ENCODE measurements at regions of chr3 and their contacts with region 1.

Region 1: DNA sequence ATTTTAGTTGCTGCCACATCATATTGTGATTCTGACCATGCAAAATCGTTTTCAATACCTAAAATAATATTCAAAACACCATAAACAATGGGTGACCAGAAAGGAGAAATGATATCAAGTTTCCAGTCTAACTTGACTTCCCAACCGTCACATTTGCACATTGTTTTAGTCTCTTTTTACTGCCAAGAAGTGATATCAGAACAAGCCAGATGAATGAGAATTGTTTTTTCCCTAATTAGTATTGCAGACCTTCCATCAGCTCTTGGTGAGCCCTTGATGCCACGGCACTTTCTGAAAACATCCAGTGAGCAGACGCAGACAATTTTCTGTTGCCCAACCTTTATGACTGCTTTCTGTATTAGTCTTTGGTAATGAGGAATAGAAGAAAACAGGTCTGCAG is 62.5 kb downstream of the SPATA16 start:
- DNase-seq: no peak
- H3K4me3 ChIP-seq: no peak overlapping the region
- H3K27ac ChIP-seq: no peak overlapping the region
- H3K4me1 ChIP-seq: no peaks in the 10 kb centered on the region
- H3K27me3 ChIP-seq: no peaks in the 10 kb centered on the region
- CTCF ChIP-seq: no peak
- POLR2A ChIP-seq: no peak

Region 2: GRCh38 chr3:172289582-172289981 is 788.9 kb before region 1 on chr3:
- intact Hi-C with region 1: no loop called
- DNase-seq: no peak
- H3K4me3 ChIP-seq: no peak overlapping the region
- H3K27ac ChIP-seq: no peak overlapping the region
- H3K4me1 ChIP-seq: peaks cover 8% of the 10 kb centered on the region
- H3K27me3 ChIP-seq: no peaks in the 10 kb centered on the region
- CTCF ChIP-seq: peak in 1 of 3 experiments; percentile 28
- POLR2A ChIP-seq: no peak

Region 3: DNA sequence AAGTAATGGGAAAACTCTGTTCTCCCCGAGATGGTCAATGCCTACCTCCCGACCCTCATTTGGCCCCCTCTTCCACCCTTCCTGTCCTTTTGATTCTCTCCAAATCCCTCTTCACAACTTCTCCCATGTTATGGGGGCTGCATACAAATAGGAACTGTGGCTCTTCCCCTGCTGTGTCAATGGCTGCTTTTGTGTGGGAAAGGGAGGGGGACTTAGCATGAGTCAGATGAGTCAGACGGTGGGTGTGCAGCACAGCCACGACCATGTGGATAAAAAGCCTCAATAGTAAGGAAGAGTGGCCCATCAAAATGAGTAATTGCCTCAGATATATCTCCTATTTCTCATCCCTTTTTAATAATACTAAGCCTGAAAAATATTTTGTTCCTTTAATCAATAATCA is 30.6 kb after region 1 on chr3:
- intact Hi-C with region 1: loop called (anchors 1 kb)
- DNase-seq: no peak
- H3K4me3 ChIP-seq: no peak overlapping the region
- H3K27ac ChIP-seq: no peak overlapping the region
- H3K4me1 ChIP-seq: no peaks in the 10 kb centered on the region
- H3K27me3 ChIP-seq: no peaks in the 10 kb centered on the region
- CTCF ChIP-seq: no peak
- POLR2A ChIP-seq: no peak